ENCODE measurements at regions of chr20 and their contacts with region 1.

Region 1: DNA sequence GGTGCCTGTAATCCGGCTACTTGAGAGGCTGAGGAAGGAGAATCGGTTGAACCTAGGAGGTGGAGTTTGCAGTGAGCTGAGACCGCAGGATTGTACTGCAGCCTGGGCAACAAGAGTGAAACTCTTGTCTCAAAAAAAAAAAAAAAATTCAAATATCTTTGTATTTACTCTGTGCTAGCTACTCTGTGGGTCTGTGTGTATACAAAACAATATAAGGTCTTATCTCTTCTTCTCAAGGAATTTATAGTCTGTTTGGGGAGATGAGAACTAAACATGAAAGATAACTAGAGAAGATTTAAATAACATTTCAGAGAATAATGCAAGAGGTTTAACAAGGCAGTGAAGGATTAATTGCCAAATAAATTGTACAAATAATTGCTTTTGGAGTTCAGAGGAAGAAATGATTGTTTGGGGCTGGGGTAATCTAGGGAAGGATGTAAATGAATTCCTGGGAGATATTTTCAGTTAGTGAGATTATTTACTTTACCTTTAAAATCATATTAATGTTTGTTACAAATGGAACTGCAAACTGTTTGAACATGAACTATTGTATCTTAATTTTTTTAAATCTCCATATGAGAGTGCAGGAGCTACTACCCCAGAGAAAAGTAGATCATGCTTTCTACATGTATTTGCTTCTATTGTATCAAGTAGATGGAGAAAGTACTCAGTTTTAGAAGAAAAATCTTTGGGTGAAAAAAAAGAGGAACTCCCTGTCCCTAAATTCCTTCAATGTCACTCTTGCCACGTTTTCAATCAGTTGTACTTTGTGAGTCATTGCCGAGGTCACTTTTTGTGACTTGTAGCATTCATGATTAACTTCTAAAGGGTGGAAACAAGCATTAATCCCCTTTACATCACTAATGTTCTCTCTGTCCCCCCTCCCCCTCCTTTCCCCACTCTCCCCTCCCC is 39.0 kb downstream of the NCOA3 start:
- DNase-seq: peak; percentile 21
- ATAC-seq: peak; percentile 22; the same call in 2 of the 3 replicates
- H3K4me3 ChIP-seq: no peak overlapping the region
- H3K27ac ChIP-seq: no peak overlapping the region
- H3K4me1 ChIP-seq: peaks cover 35% of the 10 kb centered on the region
- H3K27me3 ChIP-seq: no peaks in the 10 kb centered on the region
- CTCF ChIP-seq: no peak
- EP300 ChIP-seq: no peak
- POLR2A ChIP-seq: no peak
- RAD21 ChIP-seq: no peak

Region 2: GRCh38 chr20:47529840-47530239 is 10.9 kb before region 1 on chr20:
- CTCF ChIA-PET with region 1: interaction called, 3 read pairs
- POLR2A ChIA-PET with region 1: interaction called, 6 read pairs
- RAD21 ChIA-PET with region 1: interaction called, 8 read pairs
- SMC1A ChIA-PET with region 1: interaction called, 18 read pairs
- in situ Hi-C with region 1: no loop called
- intact Hi-C with region 1: no loop called
- DNase-seq: no peak
- ATAC-seq: no peak
- H3K4me3 ChIP-seq: no peak overlapping the region
- H3K27ac ChIP-seq: no peak overlapping the region
- H3K4me1 ChIP-seq: peaks cover 17% of the 10 kb centered on the region
- H3K27me3 ChIP-seq: no peaks in the 10 kb centered on the region
- CTCF ChIP-seq: no peak
- EP300 ChIP-seq: no peak
- POLR2A ChIP-seq: no peak
- RAD21 ChIP-seq: no peak

Measured in GM12878 (cell line).